OCI-LY7 (cell line): ENCODE measurements at regions of chr1 and their contacts with region 1.

Region 1: DNA sequence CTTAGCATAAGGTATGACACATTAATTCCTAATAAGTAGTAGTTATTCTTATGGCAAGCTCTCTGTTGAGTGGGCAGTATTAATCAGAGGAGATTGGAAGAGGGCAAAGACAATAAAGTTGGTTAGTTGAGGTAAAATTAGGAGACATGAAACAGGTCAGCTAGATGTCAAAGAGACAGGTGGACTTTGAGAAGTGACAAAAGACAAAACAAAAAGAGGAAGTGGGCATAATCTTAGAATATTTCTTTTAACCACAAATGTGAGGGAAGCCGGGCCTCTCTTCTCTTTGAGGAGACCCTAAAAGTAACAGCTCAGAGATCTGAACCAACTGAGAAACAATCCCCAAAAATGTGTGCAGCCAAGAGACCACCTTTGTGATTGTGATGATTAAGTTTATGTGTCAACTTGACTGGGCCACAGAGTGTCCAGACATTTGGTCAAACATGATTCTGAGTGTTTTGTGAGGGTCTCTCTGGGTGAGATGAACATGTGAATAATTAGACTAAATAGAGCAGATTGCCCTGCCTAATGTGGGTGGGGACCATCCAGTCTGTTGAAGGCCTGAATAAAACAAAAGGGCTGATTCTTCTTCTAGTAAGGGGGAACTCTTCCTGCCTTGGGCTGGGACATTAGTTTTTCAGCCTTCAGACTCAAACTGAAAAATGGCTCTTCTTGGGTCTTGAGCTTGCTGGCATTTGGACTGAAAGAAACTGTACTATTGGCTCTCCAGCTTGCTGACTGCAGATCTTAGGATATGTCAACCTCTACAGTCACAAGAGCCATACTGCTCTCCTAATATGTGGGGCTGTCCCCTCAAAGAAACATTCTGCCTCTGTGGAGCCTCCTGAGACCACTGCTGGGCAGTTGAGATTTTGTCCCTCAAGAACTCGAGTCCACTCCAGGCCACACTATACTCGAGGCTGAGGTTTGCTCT is 40.0 kb downstream of the FCRL5 start:
- DNase-seq: peak; percentile 92
- H3K4me3 ChIP-seq: peak overlapping the region; percentile 49
- H3K27ac ChIP-seq: peak overlapping the region; percentile 99
- H3K4me1 ChIP-seq: peaks cover 76% of the 10 kb centered on the region
- CTCF ChIP-seq: no peak

Region 2: GRCh38 chr1:157523774-157524493 is 11.6 kb after region 1 on chr1:
- CTCF ChIA-PET with region 1: no interaction called
- POLR2A ChIA-PET with region 1: interaction called, 11 read pairs
- intact Hi-C with region 1: no loop called
- DNase-seq: peak; percentile 61
- H3K4me3 ChIP-seq: peak overlapping the region; percentile 26
- H3K27ac ChIP-seq: peak overlapping the region; percentile 55
- H3K4me1 ChIP-seq: peaks cover 19% of the 10 kb centered on the region
- CTCF ChIP-seq: no peak

Region 3: DNA sequence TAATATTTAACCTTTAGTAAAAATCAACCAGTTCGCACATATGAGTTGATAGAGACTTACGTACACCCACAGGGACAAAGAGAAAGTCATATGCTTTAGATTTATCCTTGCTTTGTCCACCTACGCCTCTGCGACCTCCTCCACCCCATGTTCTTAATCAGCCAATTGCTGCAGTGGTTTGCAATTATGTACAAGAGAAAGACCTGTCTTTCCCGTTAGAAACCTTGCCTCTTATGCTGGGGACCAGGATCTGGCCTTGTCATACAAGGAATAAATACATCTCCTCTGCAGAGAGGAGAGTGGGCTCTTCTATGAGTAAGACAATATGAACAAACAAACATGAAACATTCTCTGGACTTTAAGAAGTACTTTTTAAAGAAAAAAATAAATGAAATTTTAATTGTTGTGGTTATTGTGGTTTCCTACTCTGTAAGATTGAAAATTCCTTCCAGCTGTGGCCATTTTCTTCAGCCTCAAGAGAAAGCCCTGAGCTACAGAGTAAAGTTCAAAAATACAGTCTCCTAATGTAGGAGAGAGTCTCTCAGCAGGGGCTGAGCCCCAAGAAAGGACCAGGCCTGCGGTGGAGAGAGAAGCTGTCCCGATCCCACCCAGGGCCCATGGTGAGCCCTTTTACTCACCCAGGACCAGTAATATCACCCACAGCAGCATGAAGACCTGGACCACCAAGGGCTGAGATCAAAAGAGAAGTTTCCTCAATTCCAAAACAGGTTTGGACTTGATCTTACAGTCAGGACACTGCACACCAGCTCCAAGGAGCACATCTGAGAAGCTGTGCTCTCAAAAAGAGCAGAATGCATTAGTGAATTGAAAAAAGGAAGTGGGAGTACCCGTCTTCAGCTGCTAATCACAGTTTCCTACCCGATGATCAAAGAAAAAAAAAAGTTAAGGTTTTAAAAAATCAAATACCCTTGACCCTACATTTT is 39.7 kb after region 1 on chr1 and contains the start of gene FCRL5:
- CTCF ChIA-PET with region 1: no interaction called
- POLR2A ChIA-PET with region 1: interaction called, 5 read pairs
- intact Hi-C with region 1: loop called (anchors 5 kb)
- DNase-seq: peak; percentile 77
- H3K4me3 ChIP-seq: peak within 1 kb of the TSS; percentile 74
- H3K27ac ChIP-seq: peak within 1 kb of the TSS; percentile 86
- H3K4me1 ChIP-seq: peaks cover 38% of the 10 kb centered on the region
- CTCF ChIP-seq: no peak
- total RNA-seq, gene FCRL5: 64.6 and 73.5 TPM in 2 replicates

Region 4: DNA sequence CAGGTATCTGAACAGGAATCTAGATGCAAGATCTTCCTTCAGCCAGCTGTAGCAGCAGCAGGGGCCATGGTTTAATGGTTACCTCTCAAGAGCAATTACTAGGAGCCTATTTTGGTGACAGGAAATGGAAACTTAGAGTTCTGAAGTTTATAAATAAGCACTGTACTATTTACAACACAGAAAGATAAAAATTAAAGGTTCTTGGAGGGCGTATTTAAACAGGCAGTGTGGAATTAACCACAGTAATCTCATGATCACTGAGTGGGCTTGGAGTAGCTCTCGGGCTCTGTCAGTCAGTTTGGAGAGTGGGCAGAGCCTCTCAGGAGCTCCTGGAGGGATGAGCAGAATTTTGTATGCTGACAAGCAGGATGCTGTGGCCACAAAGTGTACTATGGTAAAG is 50.2 kb after region 1 on chr1:
- CTCF ChIA-PET with region 1: interaction called, 4 read pairs
- POLR2A ChIA-PET with region 1: interaction called, 42 read pairs
- intact Hi-C with region 1: loop called (anchors 1 kb)
- DNase-seq: peak; percentile 90
- H3K4me3 ChIP-seq: peak overlapping the region; percentile 12
- H3K27ac ChIP-seq: peak overlapping the region; percentile 64
- H3K4me1 ChIP-seq: peaks cover 72% of the 10 kb centered on the region
- CTCF ChIP-seq: no peak

Region 5: DNA sequence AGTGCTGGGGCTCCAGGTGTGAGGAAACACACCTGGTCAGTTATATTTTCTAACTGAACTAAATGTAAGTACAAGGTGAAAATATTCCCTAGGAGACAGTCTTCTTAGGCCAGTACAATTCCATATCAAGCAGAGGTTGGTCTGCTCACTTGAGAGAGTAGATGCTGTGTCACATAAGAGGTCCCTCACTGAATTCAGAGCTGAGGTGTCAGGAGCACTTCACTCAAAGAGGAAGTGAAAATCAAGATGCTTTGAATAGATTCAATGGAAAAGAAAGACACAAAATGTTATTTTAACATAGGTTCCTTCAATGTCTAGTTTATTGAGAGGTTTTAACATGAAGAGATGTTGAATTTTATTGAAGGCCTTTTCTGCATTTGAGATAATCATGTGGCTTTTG is 192.6 kb after region 1 on chr1:
- CTCF ChIA-PET with region 1: interaction called, 4 read pairs
- POLR2A ChIA-PET with region 1: interaction called, 3 read pairs
- intact Hi-C with region 1: loop called (anchors 5 kb)
- DNase-seq: peak; percentile 84
- H3K4me3 ChIP-seq: peak overlapping the region; percentile 2
- H3K27ac ChIP-seq: peak overlapping the region; percentile 50
- H3K4me1 ChIP-seq: peaks cover 80% of the 10 kb centered on the region
- CTCF ChIP-seq: no peak